ENCODE measurements at regions of chr2 and their contacts with region 1.

Region 1: GRCh38 chr2:98126061-98126460 is 39.1 kb downstream of the VWA3B start:
- DNase-seq: no peak
- ATAC-seq: no peak
- H3K4me3 ChIP-seq: no peak overlapping the region
- H3K27ac ChIP-seq: no peak overlapping the region
- H3K4me1 ChIP-seq: no peaks in the 10 kb centered on the region
- H3K27me3 ChIP-seq: peaks cover 21% of the 10 kb centered on the region; the same call in 1 of the 2 replicates
- CTCF ChIP-seq: no peak

Region 2: DNA sequence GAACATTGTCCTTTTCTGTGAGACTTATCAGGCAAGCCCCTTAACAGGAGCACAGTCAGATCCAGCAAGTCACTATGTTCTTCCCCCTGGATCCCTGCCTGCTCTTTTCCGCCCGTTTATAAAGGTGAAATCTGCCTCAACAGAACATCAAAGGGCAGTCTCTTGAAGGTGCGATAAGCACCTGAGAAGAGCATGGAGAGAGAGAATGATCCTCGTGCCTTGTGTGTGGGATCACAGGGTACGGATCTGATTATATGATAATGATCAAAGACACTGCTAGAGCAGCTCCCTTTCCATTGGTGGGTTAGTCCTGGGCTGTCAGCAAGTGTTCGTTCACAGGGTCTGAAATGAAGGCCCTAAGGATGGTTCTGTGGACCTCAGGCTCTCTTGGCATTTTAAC is 306.3 kb before region 1 on chr2:
- CTCF ChIA-PET with region 1: no interaction called
- POLR2A ChIA-PET with region 1: no interaction called
- intact Hi-C with region 1: no loop called
- DNase-seq: no peak
- ATAC-seq: no peak
- H3K4me3 ChIP-seq: no peak overlapping the region
- H3K27ac ChIP-seq: no peak overlapping the region
- H3K4me1 ChIP-seq: no peaks in the 10 kb centered on the region
- H3K27me3 ChIP-seq: no peaks in the 10 kb centered on the region
- CTCF ChIP-seq: no peak

Region 3: GRCh38 chr2:98172951-98173350 is 46.9 kb after region 1 on chr2:
- CTCF ChIA-PET with region 1: interaction called, 15 read pairs
- POLR2A ChIA-PET with region 1: no interaction called
- intact Hi-C with region 1: no loop called
- DNase-seq: no peak
- ATAC-seq: no peak
- H3K4me3 ChIP-seq: no peak overlapping the region
- H3K27ac ChIP-seq: no peak overlapping the region
- H3K4me1 ChIP-seq: no peaks in the 10 kb centered on the region
- H3K27me3 ChIP-seq: peaks cover 23% of the 10 kb centered on the region
- CTCF ChIP-seq: no peak

Measured in PC-3 (cell line).